Heart left ventricle (tissue), 16 donors: ENCODE measurements at regions of chr5 and their contacts with region 1.

Region 1: GRCh38 chr5:73565139-73565968 is at the starts of genes ANKRA2 and UTP15:
- DNase-seq: peak; percentile 99 to 100 (median 100)
- ATAC-seq: peak; percentile 99
- H3K4me3 ChIP-seq: peak within 1 kb of the TSS; percentile 53 to 91 (median 79)
- H3K27ac ChIP-seq: peak within 1 kb of the TSS; percentile 77 to 97 (median 93)
- H3K4me1 ChIP-seq: peaks cover 0 to 38% (median 30%) of the 10 kb centered on the region in 12 donors
- H3K27me3 ChIP-seq: no peaks in the 10 kb centered on the region
- CTCF ChIP-seq: no peak
- POLR2A ChIP-seq: peak in 1 of 2 donors; percentile 38
- total RNA-seq, gene ANKRA2: 10.3 to 14.9 (median 11.4) TPM
- total RNA-seq, gene UTP15: 6.7 to 12.5 (median 10.2) TPM

Region 2: DNA sequence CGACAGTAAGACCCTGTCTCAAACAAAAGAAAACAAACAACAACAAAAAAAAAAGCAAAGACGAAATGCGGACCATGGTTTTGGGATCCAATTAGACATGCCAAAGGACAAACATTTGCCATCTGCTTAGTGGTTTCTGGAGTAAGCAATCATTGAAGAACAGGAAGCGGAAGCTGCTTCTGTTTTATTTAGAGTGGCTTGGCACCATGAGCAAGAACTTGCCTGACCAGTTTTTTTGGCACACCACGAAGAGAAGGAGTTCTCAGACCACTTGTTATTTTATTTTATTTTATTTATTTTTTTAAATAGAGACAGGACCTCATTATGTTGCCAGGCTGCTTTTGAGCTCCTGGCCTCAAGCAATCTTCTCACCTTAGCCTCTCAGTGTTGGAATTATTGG is 50.1 kb before region 1 on chr5:
- intact Hi-C with region 1: no loop called
- DNase-seq: no peak
- ATAC-seq: no peak
- H3K4me3 ChIP-seq: no peak overlapping the region
- H3K27ac ChIP-seq: no peak overlapping the region
- H3K4me1 ChIP-seq: peaks cover 0 to 3% (median 0%) of the 10 kb centered on the region in 12 donors
- H3K27me3 ChIP-seq: no peaks in the 10 kb centered on the region
- CTCF ChIP-seq: no peak
- POLR2A ChIP-seq: no peak

Region 3: DNA sequence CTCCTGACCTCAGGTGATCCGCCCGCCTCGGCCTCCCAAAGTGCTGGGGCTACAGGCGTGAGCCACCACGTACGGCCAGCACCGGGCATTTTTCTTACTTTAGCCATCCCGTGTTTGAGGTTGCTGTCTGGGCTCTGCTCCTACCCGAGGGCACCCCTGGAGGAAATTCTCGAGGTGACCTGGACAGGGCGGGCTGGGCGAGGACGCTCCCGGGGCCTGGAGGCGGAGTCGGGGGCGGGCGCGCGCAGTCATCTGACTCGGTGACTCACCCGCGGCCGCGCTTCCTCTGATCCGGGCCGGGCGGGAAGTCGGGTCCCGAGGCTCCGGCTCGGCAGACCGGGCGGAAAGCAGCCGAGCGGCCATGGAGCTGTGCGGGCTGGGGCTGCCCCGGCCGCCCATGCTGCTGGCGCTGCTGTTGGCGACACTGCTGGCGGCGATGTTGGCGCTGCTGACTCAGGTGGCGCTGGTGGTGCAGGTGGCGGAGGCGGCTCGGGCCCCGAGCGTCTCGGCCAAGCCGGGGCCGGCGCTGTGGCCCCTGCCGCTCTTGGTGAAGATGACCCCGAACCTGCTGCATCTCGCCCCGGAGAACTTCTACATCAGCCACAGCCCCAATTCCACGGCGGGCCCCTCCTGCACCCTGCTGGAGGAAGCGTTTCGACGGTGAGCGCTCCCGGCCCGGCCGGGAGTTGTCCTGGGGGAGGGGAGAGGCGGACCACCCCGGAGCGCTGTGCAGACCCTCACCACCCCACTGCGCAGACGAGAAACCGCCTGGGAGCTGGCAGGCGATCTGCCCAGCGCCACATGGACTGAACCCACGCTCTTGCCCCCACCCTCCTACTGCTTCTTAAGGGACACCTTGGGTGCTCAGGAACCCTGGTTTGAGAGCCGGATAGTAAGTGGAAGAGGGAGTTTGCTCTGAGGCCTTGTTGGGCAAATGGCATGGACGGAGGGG is 1119.8 kb after region 1 on chr5 and contains the start of gene HEXB:
- intact Hi-C with region 1: loop called in 1 of 10 experiments (anchors 10 kb)
- DNase-seq: peak; percentile 92 to 96 (median 93)
- ATAC-seq: peak; percentile 97 to 99 (median 98)
- H3K4me3 ChIP-seq: peak within 1 kb of the TSS; percentile 79 to 99 (median 93)
- H3K27ac ChIP-seq: peak within 1 kb of the TSS; percentile 55 to 96 (median 90)
- H3K4me1 ChIP-seq: peaks cover 0 to 29% (median 18%) of the 10 kb centered on the region in 12 donors
- H3K27me3 ChIP-seq: no peaks in the 10 kb centered on the region
- CTCF ChIP-seq: no peak
- POLR2A ChIP-seq: peak in 1 of 2 donors; percentile 94
- total RNA-seq, gene HEXB: 71.3 to 278 (median 116) TPM